ENCODE measurements at regions of chr5 and their contacts with region 1.

Region 1: GRCh38 chr5:73135429-73136054 is 15.2 kb downstream of the TMEM171 start:
- DNase-seq: peak in 1 of 2 experiments; percentile 17
- H3K4me3 ChIP-seq: no peak overlapping the region
- H3K27ac ChIP-seq: no peak overlapping the region
- H3K4me1 ChIP-seq: no peaks in the 10 kb centered on the region
- H3K27me3 ChIP-seq: no peaks in the 10 kb centered on the region
- CTCF ChIP-seq: peak; percentile 71

Region 2: GRCh38 chr5:73412597-73412988 is 277.1 kb after region 1 on chr5:
- CTCF ChIA-PET with region 1: no interaction called
- POLR2A ChIA-PET with region 1: no interaction called
- intact Hi-C with region 1: no loop called
- DNase-seq: peak in 1 of 2 experiments; percentile 71
- H3K4me3 ChIP-seq: no peak overlapping the region
- H3K27ac ChIP-seq: peak overlapping the region; percentile 65
- H3K4me1 ChIP-seq: peaks cover 18% of the 10 kb centered on the region
- H3K27me3 ChIP-seq: no peaks in the 10 kb centered on the region
- CTCF ChIP-seq: no peak

Region 3: DNA sequence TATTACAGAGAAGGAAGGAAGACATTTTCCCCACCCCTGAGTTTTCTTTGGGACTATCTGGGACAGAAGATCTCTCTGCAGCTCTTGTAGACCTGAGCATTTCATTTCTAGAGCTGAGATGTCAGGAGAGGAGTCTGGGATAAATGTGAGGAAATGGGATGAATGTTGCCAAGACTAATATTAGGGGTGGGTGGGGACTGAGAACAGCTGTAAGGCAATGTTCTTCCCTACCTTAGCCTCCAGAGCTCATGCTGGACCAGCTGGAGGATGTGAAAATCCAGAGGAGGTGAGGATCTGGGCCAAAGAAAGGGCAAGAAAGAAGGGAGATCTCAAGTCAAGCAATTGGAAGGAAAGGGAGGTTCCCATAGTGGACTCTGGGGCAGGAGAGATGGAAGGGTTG is 336.1 kb after region 1 on chr5:
- CTCF ChIA-PET with region 1: no interaction called
- POLR2A ChIA-PET with region 1: interaction called, 11 read pairs
- intact Hi-C with region 1: no loop called
- DNase-seq: no peak
- H3K4me3 ChIP-seq: no peak overlapping the region
- H3K27ac ChIP-seq: no peak overlapping the region
- H3K4me1 ChIP-seq: no peaks in the 10 kb centered on the region
- H3K27me3 ChIP-seq: no peaks in the 10 kb centered on the region
- CTCF ChIP-seq: no peak

Measured in PC-9 (cell line).